ENCODE measurements at regions of chr17 and their contacts with region 1.

Region 1: DNA sequence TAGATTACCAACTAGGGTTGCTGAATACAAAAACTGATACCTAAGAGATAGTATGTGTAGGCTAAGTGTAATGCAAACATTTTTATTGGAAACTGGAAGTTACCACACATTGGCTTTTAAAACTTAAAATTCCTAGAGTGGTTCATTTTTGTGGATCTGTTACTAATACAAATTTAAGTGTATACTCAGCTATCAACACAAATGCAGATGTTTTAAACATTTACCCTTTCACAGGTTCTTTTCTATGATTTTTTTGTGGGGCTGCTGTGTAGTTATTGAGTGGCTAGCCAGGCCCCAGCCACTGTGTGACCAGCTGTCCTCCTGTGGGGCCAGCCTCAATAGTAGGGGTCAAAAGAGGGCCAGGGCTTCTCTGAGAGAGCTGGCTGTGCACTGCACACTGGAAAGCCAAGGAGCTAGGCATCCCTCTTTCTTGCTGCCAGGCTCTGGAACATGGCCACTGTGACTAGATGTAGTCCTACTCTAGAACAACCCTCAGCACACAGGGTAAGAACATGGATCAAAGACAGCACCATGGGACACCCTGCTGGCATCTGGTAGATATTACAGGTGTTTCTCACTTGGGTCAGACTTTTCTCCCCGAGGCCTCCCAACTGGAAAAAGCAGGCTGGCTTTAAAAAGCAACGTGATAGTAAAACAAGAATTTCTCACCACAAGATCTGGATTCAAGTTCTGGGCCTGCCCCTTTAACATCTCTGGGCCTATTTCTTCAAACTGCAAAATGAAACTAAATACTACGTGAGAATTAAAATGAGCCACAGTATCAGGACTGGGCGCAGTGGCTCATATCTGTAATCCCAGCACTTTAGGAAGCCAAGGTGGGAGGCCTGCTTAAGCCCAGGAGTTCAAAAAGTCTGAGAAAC is 7.3 kb upstream of the VEZF1 start:
- DNase-seq: peak; percentile 61
- ATAC-seq: peak; percentile 81
- H3K4me3 Mint-ChIP-seq: no peak overlapping the region
- H3K27ac Mint-ChIP-seq: peak overlapping the region; percentile 52
- H3K4me1 Mint-ChIP-seq: peaks cover 51% of the 10 kb centered on the region
- H3K27me3 Mint-ChIP-seq: no peaks in the 10 kb centered on the region
- CTCF ChIP-seq: peak; percentile 50; the same call in 1 of the 2 replicates

Region 2: DNA sequence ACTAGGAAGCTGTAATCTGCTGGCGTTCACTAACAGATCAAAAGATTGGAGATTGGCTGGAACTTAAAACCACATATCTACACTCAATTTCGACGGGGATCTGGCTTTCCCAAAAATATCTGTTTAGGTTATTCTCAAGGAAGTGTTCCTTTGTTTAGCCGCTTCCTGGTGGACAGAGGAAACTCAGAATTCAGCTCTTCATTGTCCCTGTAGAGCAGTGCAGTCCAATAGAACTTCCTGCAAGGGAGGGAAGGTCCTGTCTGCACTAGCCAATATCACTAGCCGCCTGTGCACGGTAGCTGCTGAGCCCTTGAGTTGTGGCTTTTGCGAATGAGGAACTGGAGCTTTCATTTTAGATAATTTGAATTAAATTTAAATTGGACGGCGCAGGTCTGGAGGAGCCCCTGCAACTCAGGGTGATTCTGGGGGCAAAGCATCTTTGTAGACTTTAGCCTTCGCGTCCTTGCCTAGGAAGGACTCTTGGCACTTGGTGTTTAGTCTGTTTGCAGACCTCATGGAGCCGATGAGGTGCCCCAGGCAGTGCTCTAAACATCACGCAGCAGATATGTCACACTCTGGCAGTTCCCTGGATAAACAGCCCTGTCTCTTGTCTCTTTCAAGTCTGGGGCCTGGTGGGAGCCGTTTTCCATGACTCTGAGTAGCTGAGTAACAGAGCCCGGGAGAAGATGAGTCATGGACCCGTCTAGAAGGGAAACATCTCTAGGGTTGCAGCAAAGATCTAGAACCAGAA is 372.5 kb before region 1 on chr17:
- CTCF ChIA-PET with region 1: no interaction called
- POLR2A ChIA-PET with region 1: no interaction called
- DNase-seq: no peak
- ATAC-seq: no peak
- H3K4me3 Mint-ChIP-seq: no peak overlapping the region
- H3K27ac Mint-ChIP-seq: 0 out of 2 replicates have a peak overlapping the region, but pooled peaks have one; percentile 27
- H3K4me1 Mint-ChIP-seq: peaks cover 3% of the 10 kb centered on the region; the same call in 1 of the 2 replicates
- H3K27me3 Mint-ChIP-seq: no peaks in the 10 kb centered on the region
- CTCF ChIP-seq: no peak

Region 3: DNA sequence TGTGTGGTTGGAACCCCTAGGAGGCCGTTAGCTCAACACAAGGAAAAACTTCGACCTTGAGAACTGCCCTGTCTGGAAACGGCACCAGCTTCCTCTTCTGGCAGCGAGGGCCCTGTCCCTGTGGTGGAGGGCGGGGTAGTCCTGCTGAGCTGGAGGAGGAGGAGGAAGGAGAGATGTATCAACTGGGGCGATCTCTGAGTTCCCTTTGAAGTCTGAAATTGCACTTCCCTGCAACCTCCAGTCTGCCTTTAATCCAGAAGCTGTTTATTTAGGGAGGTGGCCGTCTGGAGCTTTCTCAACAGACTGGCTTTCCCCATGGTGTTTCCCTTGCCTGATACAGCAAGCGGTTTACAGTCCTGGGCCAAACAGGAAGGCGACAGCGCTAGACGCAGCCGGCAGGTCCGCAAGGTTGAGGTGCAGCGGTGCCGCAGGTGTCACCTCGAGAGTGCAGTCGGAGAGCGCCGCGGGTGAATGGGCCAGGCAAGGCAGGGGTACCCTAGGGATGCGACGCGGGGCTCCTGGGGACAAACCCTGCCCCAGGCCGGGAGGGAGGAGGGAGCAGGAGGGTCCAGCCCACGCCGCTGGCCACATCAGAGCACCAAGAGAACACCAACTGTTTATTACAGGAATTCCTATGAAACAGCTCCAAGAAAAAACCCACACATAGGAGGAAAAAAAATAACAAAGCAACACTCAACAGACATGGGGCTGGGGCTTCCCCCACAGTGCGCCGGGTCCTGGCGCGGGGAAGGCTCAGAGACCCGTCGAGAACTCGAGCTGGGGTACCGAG is 134.1 kb before region 1 on chr17:
- CTCF ChIA-PET with region 1: interaction called, 207 read pairs
- POLR2A ChIA-PET with region 1: interaction called, 8 read pairs
- DNase-seq: peak; percentile 58
- ATAC-seq: peak; percentile 34
- H3K4me3 Mint-ChIP-seq: peak overlapping the region; percentile 79
- H3K27ac Mint-ChIP-seq: no peak overlapping the region
- H3K4me1 Mint-ChIP-seq: peaks cover 55% of the 10 kb centered on the region
- H3K27me3 Mint-ChIP-seq: peaks cover 40% of the 10 kb centered on the region
- CTCF ChIP-seq: no peak

Region 4: GRCh38 chr17:57875309-57876115 is 119.8 kb before region 1 on chr17:
- CTCF ChIA-PET with region 1: interaction called, 15 read pairs
- POLR2A ChIA-PET with region 1: interaction called, 4 read pairs
- DNase-seq: peak; percentile 69
- ATAC-seq: peak; percentile 63
- H3K4me3 Mint-ChIP-seq: peak overlapping the region; percentile 46
- H3K27ac Mint-ChIP-seq: peak overlapping the region; percentile 87
- H3K4me1 Mint-ChIP-seq: peaks cover 82% of the 10 kb centered on the region
- H3K27me3 Mint-ChIP-seq: peaks cover 10% of the 10 kb centered on the region; the same call in 1 of the 2 replicates
- CTCF ChIP-seq: no peak

Region 5: GRCh38 chr17:57902800-57903759 is 92.2 kb before region 1 on chr17:
- CTCF ChIA-PET with region 1: interaction called, 14 read pairs
- POLR2A ChIA-PET with region 1: interaction called, 3 read pairs
- DNase-seq: no peak
- ATAC-seq: no peak
- H3K4me3 Mint-ChIP-seq: no peak overlapping the region
- H3K27ac Mint-ChIP-seq: peak overlapping the region; percentile 71; the same call in 1 of the 2 replicates
- H3K4me1 Mint-ChIP-seq: peaks cover 59% of the 10 kb centered on the region
- H3K27me3 Mint-ChIP-seq: no peaks in the 10 kb centered on the region
- CTCF ChIP-seq: no peak

Region 6: DNA sequence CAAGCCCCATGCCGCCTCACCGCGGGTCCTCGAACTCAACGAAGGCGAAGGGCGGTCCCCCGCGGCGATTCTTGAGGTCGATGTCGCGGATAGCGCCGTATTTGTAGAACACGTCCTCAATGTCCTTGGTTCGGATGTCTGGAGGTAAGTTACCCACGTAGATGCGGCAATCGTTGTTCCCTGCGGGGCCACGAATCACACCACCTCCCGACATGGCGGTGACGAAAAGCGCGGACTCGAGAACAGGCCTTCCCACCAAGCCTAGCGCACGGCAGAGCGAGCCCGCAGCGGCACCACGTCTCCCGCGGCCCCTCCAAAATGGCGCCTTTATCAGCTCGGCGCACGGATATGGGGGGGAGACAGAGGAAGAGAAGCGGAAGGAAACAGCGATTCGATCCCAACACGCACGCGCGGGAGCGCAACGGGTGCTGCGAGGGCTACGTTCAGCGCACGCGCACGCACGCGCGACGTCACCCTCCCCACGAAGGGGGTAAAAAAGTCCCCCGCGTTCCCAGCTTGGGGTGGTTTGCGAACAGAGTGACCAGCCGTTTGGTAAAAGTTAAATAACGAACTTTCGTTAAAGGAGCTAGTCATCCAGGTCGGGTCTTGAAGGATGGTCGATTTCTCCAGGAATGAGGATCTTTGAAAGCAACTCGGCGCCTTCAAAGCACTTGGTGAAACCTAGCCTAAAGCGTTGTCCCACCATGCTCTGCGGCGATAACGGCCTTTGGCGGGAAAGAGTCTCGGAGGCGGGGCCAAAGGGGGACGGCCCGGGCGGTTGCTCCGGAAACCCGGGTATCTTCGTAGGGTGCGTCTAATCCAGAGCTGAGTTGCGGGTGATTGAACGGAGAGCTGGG is 11.8 kb after region 1 on chr17 and contains the start of gene SRSF1:
- CTCF ChIA-PET with region 1: interaction called, 7 read pairs
- POLR2A ChIA-PET with region 1: interaction called, 12 read pairs
- DNase-seq: peak; percentile 96
- ATAC-seq: peak; percentile 91
- H3K4me3 Mint-ChIP-seq: peak within 1 kb of the TSS; percentile 100
- H3K27ac Mint-ChIP-seq: peak within 1 kb of the TSS; percentile 100
- H3K4me1 Mint-ChIP-seq: peaks cover 47% of the 10 kb centered on the region
- H3K27me3 Mint-ChIP-seq: no peaks in the 10 kb centered on the region
- CTCF ChIP-seq: no peak
- total RNA-seq, gene SRSF1: 349 to 387 TPM (median 366 TPM) in 3 replicates

Region 7: DNA sequence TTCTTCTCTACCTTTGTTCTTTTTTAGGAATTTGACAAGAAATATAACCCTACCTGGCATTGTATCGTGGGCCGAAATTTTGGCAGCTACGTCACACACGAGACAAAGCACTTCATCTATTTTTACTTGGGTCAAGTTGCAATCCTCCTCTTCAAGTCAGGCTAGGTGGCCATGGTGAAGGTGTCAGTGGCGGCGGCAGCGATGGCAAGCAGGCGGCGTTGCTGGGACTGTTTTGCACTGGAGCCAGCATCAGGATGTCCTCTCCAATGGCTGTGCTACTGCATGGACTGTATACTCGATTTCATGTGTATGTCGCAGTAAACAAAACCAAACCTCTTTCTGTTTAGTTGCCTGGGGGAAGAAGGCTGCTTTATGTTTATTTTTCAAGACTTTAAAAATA is 93.8 kb after region 1 on chr17:
- CTCF ChIA-PET with region 1: interaction called, 20 read pairs
- POLR2A ChIA-PET with region 1: no interaction called
- DNase-seq: no peak
- ATAC-seq: no peak
- H3K4me3 Mint-ChIP-seq: no peak overlapping the region
- H3K27ac Mint-ChIP-seq: no peak overlapping the region
- H3K4me1 Mint-ChIP-seq: peaks cover 15% of the 10 kb centered on the region
- H3K27me3 Mint-ChIP-seq: no peaks in the 10 kb centered on the region
- CTCF ChIP-seq: no peak